Calu3 (cell line): ENCODE measurements at regions of chr1 and their contacts with region 1.

Region 1: GRCh38 chr1:168801032-168801745 is 72.2 kb upstream of the DPT start:
- DNase-seq: peak; percentile 76
- H3K4me3 Mint-ChIP-seq: peak overlapping the region; percentile 19
- H3K27ac Mint-ChIP-seq: peak overlapping the region; percentile 96
- H3K4me1 Mint-ChIP-seq: peaks cover 59% of the 10 kb centered on the region
- H3K27me3 Mint-ChIP-seq: no peaks in the 10 kb centered on the region
- CTCF ChIP-seq: no peak

Region 2: DNA sequence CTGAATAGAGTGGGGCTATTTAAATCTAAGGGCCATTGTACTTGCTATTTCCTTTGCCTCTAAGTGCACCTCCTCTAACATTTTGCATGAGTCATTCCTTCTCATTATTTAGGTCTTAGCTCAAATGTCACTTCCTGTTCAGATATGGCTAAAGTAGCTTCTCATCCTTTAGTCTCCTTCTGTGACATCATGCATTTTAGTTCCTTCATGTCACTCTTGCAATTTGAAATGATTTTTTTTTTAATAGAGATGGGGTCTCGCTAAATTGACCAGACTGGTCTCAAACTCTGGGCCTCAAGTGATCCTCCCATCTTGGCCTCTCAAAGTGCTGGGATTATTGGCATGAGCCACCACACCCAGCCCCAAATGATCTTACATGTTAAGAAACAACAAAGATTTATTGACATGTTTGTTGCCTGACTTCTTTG is 513.9 kb before region 1 on chr1:
- CTCF ChIA-PET with region 1: no interaction called
- intact Hi-C with region 1: no loop called
- DNase-seq: no peak
- H3K4me3 Mint-ChIP-seq: no peak overlapping the region
- H3K27ac Mint-ChIP-seq: peak overlapping the region; percentile 17
- H3K4me1 Mint-ChIP-seq: peaks cover 43% of the 10 kb centered on the region
- H3K27me3 Mint-ChIP-seq: no peaks in the 10 kb centered on the region
- CTCF ChIP-seq: no peak

Region 3: GRCh38 chr1:168637350-168637991 is 163.7 kb before region 1 on chr1:
- CTCF ChIA-PET with region 1: interaction called, 3 read pairs
- intact Hi-C with region 1: loop called (anchors 1 kb)
- DNase-seq: peak; percentile 18
- H3K4me3 Mint-ChIP-seq: peak overlapping the region; percentile 4
- H3K27ac Mint-ChIP-seq: peak overlapping the region; percentile 85
- H3K4me1 Mint-ChIP-seq: peaks cover 30% of the 10 kb centered on the region
- H3K27me3 Mint-ChIP-seq: no peaks in the 10 kb centered on the region
- CTCF ChIP-seq: peak; percentile 49

Region 4: DNA sequence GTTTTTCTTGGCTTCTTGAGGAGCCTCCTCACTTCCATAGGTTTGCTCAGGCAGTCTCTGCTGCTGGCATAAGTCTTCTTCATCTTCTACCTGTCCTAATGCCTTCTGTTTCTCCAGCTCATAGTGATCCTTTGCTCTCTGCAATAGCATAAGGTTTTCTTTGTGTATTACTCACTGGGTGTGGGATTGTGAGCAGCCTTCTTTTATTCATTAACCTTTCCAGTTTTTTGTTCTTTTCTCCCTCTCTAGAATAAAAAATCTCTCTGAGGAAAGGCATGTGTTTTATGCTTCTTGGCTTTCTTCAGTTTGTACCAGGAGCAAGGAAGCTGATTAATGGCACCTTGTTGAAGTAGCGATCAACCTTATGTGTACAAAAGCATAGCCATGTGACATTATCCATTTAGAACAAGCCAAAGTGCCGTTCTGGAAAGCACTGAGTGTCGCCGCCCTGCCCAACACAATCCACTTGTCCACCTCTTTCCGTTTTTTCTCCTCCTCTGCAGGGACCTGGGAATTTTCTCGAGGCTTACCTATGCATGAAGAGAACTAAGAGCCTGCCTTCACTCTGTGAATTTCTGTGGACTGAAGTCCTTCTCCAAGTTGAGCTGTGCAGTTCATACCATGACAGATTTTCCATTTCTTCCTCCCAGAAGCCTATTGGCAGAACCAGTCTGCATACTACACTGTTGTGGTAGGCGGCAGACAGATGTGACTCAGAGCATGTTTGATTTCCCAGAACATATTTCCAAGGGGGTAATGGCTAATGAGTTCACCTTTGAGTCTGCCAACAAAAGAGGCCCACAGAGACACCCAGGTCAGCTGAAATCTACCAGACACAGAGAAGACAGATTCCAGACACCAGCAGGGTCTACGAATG is 111.2 kb before region 1 on chr1:
- CTCF ChIA-PET with region 1: no interaction called
- intact Hi-C with region 1: loop called (anchors 2 kb)
- DNase-seq: peak; percentile 69
- H3K4me3 Mint-ChIP-seq: peak overlapping the region; percentile 67
- H3K27ac Mint-ChIP-seq: peak overlapping the region; percentile 99
- H3K4me1 Mint-ChIP-seq: peaks cover 88% of the 10 kb centered on the region
- H3K27me3 Mint-ChIP-seq: no peaks in the 10 kb centered on the region
- CTCF ChIP-seq: no peak

Region 5: DNA sequence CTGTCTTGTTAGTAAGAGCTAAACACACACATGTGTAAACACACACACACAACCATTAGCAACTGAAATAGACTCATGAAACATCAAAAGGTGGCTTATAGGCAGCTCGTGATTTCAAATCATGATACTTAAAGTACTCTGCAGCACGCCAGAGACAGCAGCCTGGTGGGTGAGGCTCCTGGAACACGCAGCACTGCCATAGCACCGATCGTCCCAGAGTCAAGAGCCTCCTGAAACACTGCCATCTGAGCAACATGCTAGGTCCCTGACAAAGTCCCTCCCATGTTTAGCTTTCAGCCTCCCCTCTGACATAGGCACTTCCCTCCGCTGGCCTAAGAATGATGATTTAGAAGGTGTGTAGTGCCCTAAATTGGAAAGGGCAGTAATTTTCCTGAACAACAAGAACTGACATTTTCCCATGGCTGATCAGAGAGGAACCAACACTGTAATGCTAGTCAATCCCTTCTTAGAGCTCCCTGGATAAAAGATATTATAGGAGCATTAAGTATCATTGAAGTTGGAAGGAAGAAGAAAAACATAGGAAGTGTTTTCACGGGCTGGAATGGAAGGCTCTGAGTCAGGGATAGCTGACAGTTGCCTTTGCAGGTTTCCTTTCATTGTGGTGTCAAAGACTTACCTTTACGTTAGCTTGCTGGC is 58.1 kb before region 1 on chr1:
- CTCF ChIA-PET with region 1: no interaction called
- intact Hi-C with region 1: loop called (anchors 5 kb)
- DNase-seq: no peak
- H3K4me3 Mint-ChIP-seq: no peak overlapping the region
- H3K27ac Mint-ChIP-seq: no peak overlapping the region
- H3K4me1 Mint-ChIP-seq: no peaks in the 10 kb centered on the region
- H3K27me3 Mint-ChIP-seq: no peaks in the 10 kb centered on the region
- CTCF ChIP-seq: no peak

Region 6: GRCh38 chr1:168824418-168824817 is 23.2 kb after region 1 on chr1:
- CTCF ChIA-PET with region 1: no interaction called
- intact Hi-C with region 1: no loop called
- DNase-seq: no peak
- H3K4me3 Mint-ChIP-seq: no peak overlapping the region
- H3K27ac Mint-ChIP-seq: no peak overlapping the region
- H3K4me1 Mint-ChIP-seq: peaks cover 7% of the 10 kb centered on the region
- H3K27me3 Mint-ChIP-seq: no peaks in the 10 kb centered on the region
- CTCF ChIP-seq: no peak

Region 7: DNA sequence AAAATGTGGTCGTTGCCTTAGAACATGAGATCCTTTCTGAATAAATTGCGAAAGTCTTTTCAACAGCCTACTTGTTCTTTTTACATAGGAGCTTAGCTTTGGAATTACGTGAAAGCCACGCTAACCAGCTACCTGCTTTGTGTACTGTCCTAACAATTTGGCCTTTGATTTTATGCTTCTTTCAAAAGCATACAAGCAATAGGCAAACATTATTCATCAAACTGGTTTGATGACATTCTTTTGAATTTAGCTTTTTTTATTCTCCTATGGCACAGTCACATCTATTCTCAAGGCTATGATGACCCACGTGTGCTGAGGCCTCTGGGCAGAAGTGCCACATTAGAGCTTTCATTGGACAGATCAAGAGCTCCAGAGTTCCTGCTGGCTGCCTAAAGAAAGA is 105.9 kb after region 1 on chr1:
- CTCF ChIA-PET with region 1: no interaction called
- intact Hi-C with region 1: loop called (anchors 2 kb)
- DNase-seq: peak; percentile 61
- H3K4me3 Mint-ChIP-seq: peak overlapping the region; percentile 36
- H3K27ac Mint-ChIP-seq: peak overlapping the region; percentile 98
- H3K4me1 Mint-ChIP-seq: peaks cover 53% of the 10 kb centered on the region
- H3K27me3 Mint-ChIP-seq: no peaks in the 10 kb centered on the region
- CTCF ChIP-seq: no peak

Region 8: GRCh38 chr1:168920456-168921094 is 119.4 kb after region 1 on chr1:
- CTCF ChIA-PET with region 1: no interaction called
- intact Hi-C with region 1: loop called (anchors 2 kb)
- DNase-seq: peak; percentile 64
- H3K4me3 Mint-ChIP-seq: peak overlapping the region; percentile 42
- H3K27ac Mint-ChIP-seq: peak overlapping the region; percentile 94
- H3K4me1 Mint-ChIP-seq: peaks cover 70% of the 10 kb centered on the region
- H3K27me3 Mint-ChIP-seq: no peaks in the 10 kb centered on the region
- CTCF ChIP-seq: no peak